AG04450 (cell line): ENCODE measurements at regions of chr2 and their contacts with region 1.

Region 1: DNA sequence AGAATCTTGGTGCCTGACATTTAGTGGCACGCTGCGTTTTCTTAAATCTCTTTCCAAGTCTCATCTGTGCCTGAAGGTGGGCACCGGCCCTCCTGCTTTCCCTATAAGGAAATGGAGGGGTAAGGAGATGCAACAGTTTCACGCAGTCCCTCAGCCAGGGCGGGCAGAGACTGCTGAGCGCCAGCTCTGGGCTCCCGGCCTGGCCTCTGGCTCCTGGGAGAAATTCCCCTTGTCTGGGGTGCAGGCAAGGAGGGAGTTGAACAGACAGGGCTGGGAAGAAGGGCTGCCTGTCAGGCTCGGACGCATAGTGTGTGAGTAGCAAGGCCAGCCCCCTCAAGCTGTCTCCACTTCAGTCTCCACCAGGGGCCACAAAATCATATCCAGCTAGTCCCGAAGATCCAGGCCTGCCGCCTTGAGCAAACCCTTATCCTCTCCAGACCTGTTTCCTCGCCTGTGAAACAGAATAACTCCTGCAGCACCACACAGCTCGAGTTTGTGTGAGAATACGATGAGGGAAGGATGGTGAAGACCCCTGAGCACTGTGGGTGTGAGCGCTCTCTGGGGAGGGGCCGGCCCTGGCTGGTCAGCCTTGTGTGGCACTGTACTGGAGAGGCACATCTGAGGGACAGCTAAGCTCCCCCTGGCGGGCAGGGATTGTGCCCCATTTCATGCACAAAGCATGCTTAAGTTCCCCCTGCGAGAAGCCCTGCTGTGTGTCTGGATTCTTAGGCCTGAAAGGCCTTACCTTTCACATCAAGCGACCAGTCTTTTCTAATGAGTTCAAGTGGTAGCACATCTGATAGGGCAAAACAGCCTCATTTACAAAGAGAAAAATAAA is 33.8 kb downstream of the SDC1 start:
- DNase-seq: peak; percentile 18
- H3K4me3 ChIP-seq: no peak overlapping the region
- H3K27ac ChIP-seq: no peak overlapping the region
- H3K27me3 ChIP-seq: no peaks in the 10 kb centered on the region
- CTCF ChIP-seq: peak; percentile 59

Region 2: DNA sequence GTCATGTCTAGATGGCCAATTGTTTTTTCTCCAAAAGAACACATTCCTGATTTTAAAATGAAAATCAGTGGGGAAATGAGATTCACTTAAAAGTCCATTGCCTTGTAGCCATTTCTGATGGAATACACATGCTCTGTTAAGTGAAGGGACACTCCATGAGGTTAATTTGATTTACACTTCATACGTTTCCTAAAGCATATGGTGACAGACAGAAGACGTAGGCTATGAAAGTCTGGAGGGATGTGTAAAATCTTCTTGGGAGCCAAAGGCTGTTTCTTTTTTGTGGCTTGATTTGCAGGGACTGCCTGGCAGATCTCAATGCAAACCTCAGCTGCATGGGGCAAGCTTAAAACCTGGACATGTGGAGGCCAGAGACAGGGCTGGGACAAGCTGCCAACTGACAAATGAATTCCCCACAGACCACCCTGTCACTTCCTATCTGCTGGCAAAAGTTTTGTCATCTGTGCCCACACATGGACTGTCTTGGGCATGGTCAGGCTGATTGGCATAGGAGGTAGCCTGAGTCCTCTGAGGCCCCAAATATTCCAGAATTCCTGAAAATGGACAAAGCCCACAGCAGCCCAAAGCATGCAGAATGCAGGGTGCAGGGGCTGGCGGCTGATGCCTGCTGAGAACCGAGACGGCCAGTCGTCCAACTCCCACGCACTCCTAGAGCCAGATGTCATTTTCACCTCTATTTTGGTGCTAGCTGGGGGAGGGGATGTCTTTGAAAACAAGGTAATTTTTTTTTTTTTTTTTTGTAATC is 40.1 kb before region 1 on chr2:
- CTCF ChIA-PET with region 1: interaction called, 10 read pairs
- POLR2A ChIA-PET with region 1: no interaction called
- DNase-seq: no peak
- H3K4me3 ChIP-seq: no peak overlapping the region
- H3K27ac ChIP-seq: no peak overlapping the region
- H3K27me3 ChIP-seq: no peaks in the 10 kb centered on the region
- CTCF ChIP-seq: no peak